ENCODE measurements at regions of chr17 and their contacts with region 1.

Region 1: GRCh38 chr17:6290488-6291196 is 144.3 kb downstream of the AIPL1 start:
- DNase-seq: no peak
- ATAC-seq: no peak

Region 2: DNA sequence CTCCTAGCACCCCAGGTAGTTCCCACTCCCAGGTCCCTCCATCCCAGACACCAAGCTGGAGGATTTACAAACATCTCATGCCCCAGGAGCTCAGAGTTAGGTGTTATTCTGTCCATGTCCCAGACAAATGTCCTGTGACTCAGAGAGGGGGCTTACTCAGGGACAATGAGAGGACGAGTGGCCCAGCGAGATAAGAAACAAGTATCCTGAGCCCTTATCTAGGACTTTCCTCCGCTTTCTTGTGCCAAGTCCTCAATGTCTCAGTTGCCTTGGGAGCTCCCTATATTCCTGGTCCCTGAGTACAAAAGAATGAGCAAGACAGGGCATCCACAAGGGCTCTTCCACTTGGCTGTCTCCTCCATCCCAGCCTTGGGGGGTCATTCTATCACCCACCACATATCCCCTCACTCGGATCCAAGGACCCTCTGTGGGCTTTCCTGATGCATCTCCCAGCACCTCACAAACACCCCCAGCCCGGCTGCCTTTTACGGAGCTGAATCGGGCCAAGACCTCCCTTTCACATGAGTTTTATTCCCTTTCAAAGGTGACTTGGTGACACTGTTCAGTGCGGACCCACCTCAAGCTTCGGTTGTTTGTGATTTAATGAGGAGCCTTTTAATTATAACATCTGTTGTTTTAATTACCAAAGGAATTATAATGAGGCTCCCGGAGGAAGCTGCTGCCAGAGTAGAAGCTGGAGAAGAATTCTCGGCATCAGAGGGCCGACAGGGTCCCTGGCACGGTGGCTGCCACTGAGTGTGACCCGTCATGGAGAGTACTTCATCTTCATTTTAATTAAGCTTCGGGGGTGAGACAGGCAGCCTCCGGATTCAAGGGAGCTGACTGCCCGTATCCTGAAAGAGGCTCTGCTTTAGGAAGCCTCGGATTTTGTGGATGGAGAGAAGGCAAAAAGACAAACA is 99.0 kb before region 1 on chr17:
- intact Hi-C with region 1: loop called in 1 of 2 experiments (anchors 10 kb)
- DNase-seq: no peak
- ATAC-seq: no peak

Region 3: GRCh38 chr17:6205033-6205432 is 85.6 kb before region 1 on chr17:
- intact Hi-C with region 1: no loop called
- DNase-seq: no peak
- ATAC-seq: no peak

Region 4: DNA sequence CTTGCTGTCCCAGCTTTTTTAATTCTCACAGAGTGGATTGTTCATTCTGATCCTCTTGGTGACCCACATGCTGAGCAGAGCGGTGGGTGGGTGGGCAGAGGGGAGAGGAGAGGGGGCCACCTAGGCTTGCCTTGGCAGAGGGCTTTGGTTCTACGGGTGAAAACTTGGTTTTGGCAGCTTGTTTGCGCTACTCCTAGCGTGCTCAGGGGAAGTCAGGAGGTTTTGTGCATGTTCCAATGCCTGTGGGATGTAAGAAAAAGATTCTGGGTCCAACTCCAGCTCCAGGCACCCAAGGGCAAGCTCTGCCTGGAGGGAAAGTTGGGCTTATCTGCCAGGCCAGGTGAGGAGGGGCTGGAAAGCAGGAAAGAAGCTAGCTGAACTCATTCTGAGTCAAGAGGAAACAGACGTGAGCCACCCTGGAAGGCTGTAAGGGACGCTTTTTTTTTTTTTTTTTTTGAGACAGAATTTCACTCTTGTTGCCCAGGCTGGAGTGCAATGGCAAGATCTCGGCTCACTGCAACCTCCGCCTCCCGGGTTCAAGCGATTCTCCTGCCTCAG is 51.3 kb before region 1 on chr17:
- intact Hi-C with region 1: no loop called
- DNase-seq: no peak
- ATAC-seq: no peak

Region 5: DNA sequence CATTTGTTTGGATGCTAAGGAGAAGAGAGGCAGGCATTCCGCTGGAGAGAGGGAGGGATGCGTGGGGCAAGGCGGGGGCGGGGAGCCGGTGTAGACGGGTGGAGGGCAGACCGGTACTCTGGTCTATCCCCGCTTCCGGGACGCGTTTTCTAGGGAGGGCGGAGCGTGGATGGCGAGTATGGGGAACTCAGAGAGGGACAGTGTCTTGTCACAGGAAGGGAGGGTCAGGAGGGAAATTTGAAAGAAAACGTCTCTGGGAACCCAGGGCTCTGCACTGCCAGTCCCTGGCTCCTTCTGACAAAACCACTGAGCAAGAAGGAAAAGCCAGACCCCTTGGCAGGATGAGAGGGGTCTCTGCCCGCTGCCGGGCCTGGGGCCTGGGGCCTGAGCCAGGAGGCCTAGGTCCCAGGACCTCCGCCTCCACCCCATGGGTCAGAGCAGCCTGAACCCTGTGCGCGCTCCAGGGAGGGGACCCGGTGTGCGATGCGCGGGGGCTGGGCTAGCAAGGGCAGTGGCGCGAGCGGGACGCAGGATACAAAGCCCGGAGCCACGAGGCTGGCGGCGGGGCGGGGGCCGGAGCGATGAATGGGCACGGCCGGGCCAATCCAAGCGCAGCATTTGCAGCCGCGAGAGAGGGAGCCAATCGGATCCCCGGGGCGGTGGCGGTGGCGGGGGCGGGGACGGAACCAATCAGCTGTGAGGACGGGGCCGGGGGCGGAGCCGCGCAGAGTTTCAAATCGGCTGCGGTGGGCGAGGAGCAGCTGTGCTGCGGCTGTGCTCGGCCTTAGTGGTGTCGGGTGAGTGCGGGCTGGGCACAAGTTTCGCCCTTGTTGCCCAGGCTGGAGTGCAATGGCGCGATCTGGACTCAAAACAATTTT is 153.3 kb after region 1 on chr17 and contains the start of gene PIMREG:
- intact Hi-C with region 1: no loop called
- DNase-seq: peak; percentile 97
- ATAC-seq: peak; percentile 99
- total RNA-seq, gene PIMREG: 0.29 TPM in 1 of 2 donors, not detected in the other